HCT116 (cell line): ENCODE measurements at regions of chr9 and their contacts with region 1.

Region 1: GRCh38 chr9:72364679-72365524 is at the start of gene ZFAND5:
- DNase-seq: peak; percentile 90
- ATAC-seq: peak; percentile 92
- H3K4me3 ChIP-seq: peak within 1 kb of the TSS; percentile 89 to 90
- H3K27ac ChIP-seq: peak within 1 kb of the TSS; percentile 91
- H3K4me1 ChIP-seq: peaks cover 29 to 38% of the 10 kb centered on the region in 2 experiments
- H3K27me3 ChIP-seq: no peaks in the 10 kb centered on the region
- CTCF ChIP-seq: no peak
- POLR2A ChIP-seq: peak; percentile 98
- RAD21 ChIP-seq: peak; percentile 62
- total RNA-seq, gene ZFAND5: 128 TPM

Region 2: GRCh38 chr9:72292256-72292682 is 72.6 kb before region 1 on chr9:
- CTCF ChIA-PET with region 1: interaction called, 3 read pairs
- POLR2A ChIA-PET with region 1: interaction called, 3 read pairs
- RAD21 ChIA-PET with region 1: no interaction called
- intact Hi-C with region 1: loop called (anchors 1 kb)
- DNase-seq: no peak
- ATAC-seq: peak; percentile 72
- H3K4me3 ChIP-seq: no peak overlapping the region
- H3K27ac ChIP-seq: no peak overlapping the region
- H3K4me1 ChIP-seq: peaks cover 0 to 20% of the 10 kb centered on the region in 2 experiments; a peak in 3 of 4 replicates
- H3K27me3 ChIP-seq: no peaks in the 10 kb centered on the region
- CTCF ChIP-seq: peak; percentile 41 to 72 (median 61); a peak in 4 of 6 replicates
- POLR2A ChIP-seq: no peak
- RAD21 ChIP-seq: peak; percentile 81

Region 3: DNA sequence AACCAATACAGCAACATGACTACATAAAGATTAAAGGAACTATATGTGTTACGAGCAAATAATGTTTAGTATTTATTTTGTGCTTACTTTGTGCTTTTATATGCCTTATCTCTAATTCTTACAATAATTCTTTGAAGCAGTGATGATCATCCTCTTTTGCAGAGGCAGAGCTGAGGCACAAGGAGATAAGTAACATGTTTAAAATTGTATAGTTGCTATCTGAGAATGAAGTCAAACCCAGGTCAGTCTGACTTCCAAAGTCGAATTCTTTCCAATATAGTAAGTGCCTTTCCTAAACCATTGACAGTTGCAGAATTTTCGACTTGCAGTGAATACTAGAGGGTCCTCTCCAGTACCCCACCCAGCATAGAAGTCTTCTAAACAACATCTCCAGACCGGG is 12.1 kb after region 1 on chr9:
- CTCF ChIA-PET with region 1: no interaction called
- POLR2A ChIA-PET with region 1: interaction called, 11 read pairs
- RAD21 ChIA-PET with region 1: no interaction called
- intact Hi-C with region 1: no loop called
- DNase-seq: no peak
- ATAC-seq: no peak
- H3K4me3 ChIP-seq: no peak overlapping the region
- H3K27ac ChIP-seq: no peak overlapping the region
- H3K4me1 ChIP-seq: no peaks in the 10 kb centered on the region
- H3K27me3 ChIP-seq: no peaks in the 10 kb centered on the region
- CTCF ChIP-seq: no peak
- POLR2A ChIP-seq: no peak
- RAD21 ChIP-seq: no peak

Region 4: DNA sequence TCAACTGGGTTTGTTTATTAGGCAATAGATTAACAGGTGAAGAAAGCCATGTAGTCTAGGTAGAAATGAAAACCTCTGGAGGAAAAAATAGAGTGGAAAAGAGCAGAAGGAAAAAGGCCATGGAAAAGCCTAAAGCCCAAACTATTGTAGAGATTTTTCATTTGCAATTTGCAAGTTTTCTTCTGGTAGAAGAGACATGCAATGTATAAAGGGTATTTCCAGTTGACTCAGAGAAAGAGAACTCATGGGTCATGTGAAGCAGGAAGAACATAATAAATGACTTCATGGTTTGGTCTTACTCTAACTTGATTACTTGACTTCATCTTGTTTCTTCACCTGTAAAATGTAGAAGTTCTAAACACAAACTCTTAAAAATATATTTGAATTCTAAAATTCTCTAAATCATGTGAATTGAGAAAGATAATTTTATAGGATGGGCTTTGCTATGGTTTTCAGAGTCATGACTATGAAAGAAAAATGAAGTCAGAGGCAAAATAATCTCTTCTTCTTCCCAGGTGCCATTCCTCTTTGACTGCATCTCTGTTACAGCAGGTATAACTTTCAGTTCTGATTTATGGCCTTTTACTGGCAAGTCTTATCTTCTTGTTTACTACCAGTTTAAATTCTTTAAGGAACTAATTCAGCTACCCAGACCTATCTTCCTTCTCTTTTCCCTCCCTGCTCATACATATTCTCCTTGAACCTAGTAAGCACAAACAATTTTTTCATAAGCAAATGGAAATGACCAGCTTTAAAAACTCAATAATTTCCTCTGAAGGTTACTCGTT is 108.8 kb after region 1 on chr9:
- CTCF ChIA-PET with region 1: no interaction called
- POLR2A ChIA-PET with region 1: interaction called, 61 read pairs
- RAD21 ChIA-PET with region 1: interaction called in 1 of 2 experiments, 3 read pairs
- intact Hi-C with region 1: loop called (anchors 1 kb)
- DNase-seq: no peak
- ATAC-seq: no peak
- H3K4me3 ChIP-seq: no peak overlapping the region
- H3K27ac ChIP-seq: no peak overlapping the region
- H3K4me1 ChIP-seq: peaks cover 24 to 41% of the 10 kb centered on the region in 2 experiments
- H3K27me3 ChIP-seq: no peaks in the 10 kb centered on the region
- CTCF ChIP-seq: no peak
- POLR2A ChIP-seq: no peak
- RAD21 ChIP-seq: no peak

Region 5: DNA sequence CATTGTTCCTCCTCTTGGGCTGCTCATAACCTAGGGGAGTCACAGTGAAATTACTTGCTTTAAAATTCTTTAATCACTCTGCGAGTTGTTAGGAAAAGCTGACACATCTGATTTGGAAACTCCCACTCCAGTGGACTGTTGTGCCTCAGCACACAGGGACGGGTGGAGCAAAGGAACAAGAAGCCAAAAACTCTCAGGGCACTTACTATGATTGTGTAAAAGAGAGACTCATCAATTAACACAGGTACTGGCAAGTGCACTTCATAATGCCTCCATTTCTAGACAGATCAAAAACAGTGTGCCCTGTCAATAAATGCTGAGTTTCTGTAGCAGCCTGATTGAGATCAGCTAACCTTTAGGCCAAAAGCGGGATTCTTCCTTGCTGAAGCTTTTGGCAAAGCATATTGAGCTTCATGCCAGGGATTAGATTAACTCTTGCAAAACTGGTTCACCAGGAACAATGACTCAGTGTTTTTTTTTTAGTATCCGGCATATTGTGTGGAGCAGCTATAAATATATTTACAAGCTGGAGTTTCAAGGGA is 212.4 kb after region 1 on chr9:
- CTCF ChIA-PET with region 1: no interaction called
- POLR2A ChIA-PET with region 1: interaction called, 69 read pairs
- RAD21 ChIA-PET with region 1: no interaction called
- intact Hi-C with region 1: loop called (anchors 1 kb)
- DNase-seq: peak; percentile 68
- ATAC-seq: peak; percentile 37
- H3K4me3 ChIP-seq: peak overlapping the region; percentile 12 to 38; a peak in 3 of 4 replicates
- H3K27ac ChIP-seq: peak overlapping the region; percentile 81
- H3K4me1 ChIP-seq: peaks cover 65 to 88% of the 10 kb centered on the region in 2 experiments
- H3K27me3 ChIP-seq: no peaks in the 10 kb centered on the region
- CTCF ChIP-seq: no peak
- POLR2A ChIP-seq: no peak
- RAD21 ChIP-seq: peak; percentile 47

Region 6: GRCh38 chr9:72586388-72587130 is 221.7 kb after region 1 on chr9:
- CTCF ChIA-PET with region 1: interaction called, 3 read pairs
- POLR2A ChIA-PET with region 1: interaction called, 69 read pairs
- RAD21 ChIA-PET with region 1: interaction called in 1 of 2 experiments, 3 read pairs
- intact Hi-C with region 1: no loop called
- DNase-seq: no peak
- ATAC-seq: peak; percentile 78
- H3K4me3 ChIP-seq: no peak overlapping the region
- H3K27ac ChIP-seq: no peak overlapping the region
- H3K4me1 ChIP-seq: peaks cover 16 to 49% of the 10 kb centered on the region in 2 experiments
- H3K27me3 ChIP-seq: no peaks in the 10 kb centered on the region
- CTCF ChIP-seq: no peak
- POLR2A ChIP-seq: no peak
- RAD21 ChIP-seq: peak; percentile 52

Region 7: GRCh38 chr9:72856972-72857623 is 492.2 kb after region 1 on chr9:
- CTCF ChIA-PET with region 1: no interaction called
- POLR2A ChIA-PET with region 1: no interaction called
- RAD21 ChIA-PET with region 1: no interaction called
- intact Hi-C with region 1: no loop called
- DNase-seq: peak; percentile 65
- ATAC-seq: peak; percentile 79
- H3K4me3 ChIP-seq: no peak overlapping the region
- H3K27ac ChIP-seq: no peak overlapping the region
- H3K4me1 ChIP-seq: peaks cover 8 to 21% of the 10 kb centered on the region in 2 experiments; a peak in 3 of 4 replicates
- H3K27me3 ChIP-seq: no peaks in the 10 kb centered on the region
- CTCF ChIP-seq: peak; percentile 60 to 81 (median 68); a peak in 5 of 6 replicates
- POLR2A ChIP-seq: no peak
- RAD21 ChIP-seq: peak; percentile 65